B cell (primary cell): ENCODE measurements at regions of chr16 and their contacts with region 1.

Region 1: GRCh38 chr16:71311553-71312158 is 22.5 kb upstream of the CMTR2 start:
- DNase-seq: peak; percentile 58
- ATAC-seq: peak; percentile 57
- H3K4me3 ChIP-seq: no peak overlapping the region
- H3K4me3 Mint-ChIP-seq: no peak overlapping the region
- H3K27ac ChIP-seq: no peak overlapping the region
- H3K27ac Mint-ChIP-seq: no peak overlapping the region
- H3K4me1 ChIP-seq: no peaks in the 10 kb centered on the region
- H3K4me1 Mint-ChIP-seq: no peaks in the 10 kb centered on the region
- H3K27me3 ChIP-seq: peaks cover 0 to 14% (median 5%) of the 10 kb centered on the region in 4 experiments
- H3K27me3 Mint-ChIP-seq: peaks cover 51% of the 10 kb centered on the region
- CTCF ChIP-seq: peak; percentile 85

Region 2: GRCh38 chr16:70770626-70771552 is 540.8 kb before region 1 on chr16:
- CTCF ChIA-PET with region 1: interaction called, 11 read pairs
- POLR2A ChIA-PET with region 1: no interaction called
- intact Hi-C with region 1: no loop called
- DNase-seq: peak; percentile 44
- ATAC-seq: peak; percentile 71
- H3K4me3 ChIP-seq: no peak overlapping the region
- H3K4me3 Mint-ChIP-seq: no peak overlapping the region
- H3K27ac ChIP-seq: no peak overlapping the region
- H3K27ac Mint-ChIP-seq: no peak overlapping the region
- H3K4me1 ChIP-seq: no peaks in the 10 kb centered on the region
- H3K4me1 Mint-ChIP-seq: no peaks in the 10 kb centered on the region
- H3K27me3 ChIP-seq: no peaks in the 10 kb centered on the region
- H3K27me3 Mint-ChIP-seq: no peaks in the 10 kb centered on the region
- CTCF ChIP-seq: peak; percentile 88

Region 3: GRCh38 chr16:71214746-71215381 is 96.8 kb before region 1 on chr16:
- CTCF ChIA-PET with region 1: interaction called, 32 read pairs
- POLR2A ChIA-PET with region 1: no interaction called
- intact Hi-C with region 1: loop called (anchors 1 kb)
- DNase-seq: peak; percentile 9
- ATAC-seq: no peak
- H3K4me3 ChIP-seq: no peak overlapping the region
- H3K4me3 Mint-ChIP-seq: no peak overlapping the region
- H3K27ac ChIP-seq: no peak overlapping the region
- H3K27ac Mint-ChIP-seq: no peak overlapping the region
- H3K4me1 ChIP-seq: no peaks in the 10 kb centered on the region
- H3K4me1 Mint-ChIP-seq: no peaks in the 10 kb centered on the region
- H3K27me3 ChIP-seq: peaks cover 0 to 5% (median 3%) of the 10 kb centered on the region in 4 experiments
- H3K27me3 Mint-ChIP-seq: peaks cover 19% of the 10 kb centered on the region
- CTCF ChIP-seq: peak; percentile 34

Region 4: GRCh38 chr16:71249399-71249798 is 62.3 kb before region 1 on chr16:
- CTCF ChIA-PET with region 1: interaction called, 13 read pairs
- POLR2A ChIA-PET with region 1: no interaction called
- intact Hi-C with region 1: no loop called
- DNase-seq: no peak
- ATAC-seq: no peak
- H3K4me3 ChIP-seq: no peak overlapping the region
- H3K4me3 Mint-ChIP-seq: no peak overlapping the region
- H3K27ac ChIP-seq: no peak overlapping the region
- H3K27ac Mint-ChIP-seq: no peak overlapping the region
- H3K4me1 ChIP-seq: no peaks in the 10 kb centered on the region
- H3K4me1 Mint-ChIP-seq: no peaks in the 10 kb centered on the region
- H3K27me3 ChIP-seq: no peaks in the 10 kb centered on the region
- H3K27me3 Mint-ChIP-seq: peaks cover 9% of the 10 kb centered on the region
- CTCF ChIP-seq: no peak

Region 5: DNA sequence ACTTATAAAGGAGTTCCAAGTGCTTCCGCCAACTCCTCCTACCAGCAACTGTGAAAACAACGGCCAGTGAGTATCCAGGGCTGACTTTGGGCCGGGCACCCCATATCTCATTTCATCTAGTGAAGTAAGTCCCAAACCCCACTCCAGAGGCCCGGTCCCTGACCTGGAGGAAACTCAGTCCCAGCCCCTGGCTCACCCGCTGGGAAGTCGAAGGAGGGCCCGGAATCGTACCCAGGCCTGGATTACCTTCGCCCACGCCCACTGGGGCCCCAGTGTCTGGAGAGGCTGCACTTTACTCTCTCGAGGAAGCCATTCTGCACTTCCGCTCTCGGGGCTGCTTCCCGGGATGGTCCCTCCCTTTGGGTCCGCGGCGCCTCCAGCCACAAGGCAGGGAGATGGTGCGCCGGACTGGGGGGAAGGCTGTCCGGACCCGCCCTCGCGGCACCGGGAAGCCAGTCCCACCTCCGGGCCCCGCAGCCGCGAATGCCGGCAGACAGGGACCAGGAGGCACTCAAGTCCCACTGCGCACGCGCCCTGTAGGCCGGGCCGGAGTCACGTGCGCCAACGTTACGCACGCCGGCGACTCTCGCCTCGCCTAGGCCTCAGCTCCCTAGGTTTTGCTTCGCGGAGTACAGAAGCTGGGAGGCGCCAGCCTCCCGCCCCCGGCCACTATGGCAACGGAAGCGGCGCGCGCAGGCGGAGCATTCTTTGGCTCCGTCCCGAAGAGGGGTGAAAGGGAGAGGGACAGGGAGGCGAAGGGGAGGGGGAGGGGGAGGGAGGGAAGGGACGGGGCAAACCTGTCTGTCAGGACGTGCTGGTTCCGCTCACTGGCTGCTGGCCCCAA is 22.5 kb before region 1 on chr16 and contains the start of gene CMTR2:
- CTCF ChIA-PET with region 1: no interaction called
- POLR2A ChIA-PET with region 1: interaction called, 3 read pairs
- intact Hi-C with region 1: loop called (anchors 1 kb)
- DNase-seq: peak; percentile 95
- ATAC-seq: peak; percentile 85
- H3K4me3 ChIP-seq: peak within 1 kb of the TSS; percentile 61 to 97 (median 67)
- H3K4me3 Mint-ChIP-seq: peak within 1 kb of the TSS; percentile 93
- H3K27ac ChIP-seq: peak within 1 kb of the TSS; percentile 84 to 94
- H3K27ac Mint-ChIP-seq: peak within 1 kb of the TSS; percentile 97
- H3K4me1 ChIP-seq: peaks cover 14 to 16% of the 10 kb centered on the region in 2 donors
- H3K4me1 Mint-ChIP-seq: peaks cover 32% of the 10 kb centered on the region
- H3K27me3 ChIP-seq: peaks cover 0 to 10% (median 5%) of the 10 kb centered on the region in 4 experiments
- H3K27me3 Mint-ChIP-seq: peaks cover 19% of the 10 kb centered on the region
- CTCF ChIP-seq: no peak
- total RNA-seq, gene CMTR2: 41.3 and 46.1 TPM in 2 replicates

Region 6: DNA sequence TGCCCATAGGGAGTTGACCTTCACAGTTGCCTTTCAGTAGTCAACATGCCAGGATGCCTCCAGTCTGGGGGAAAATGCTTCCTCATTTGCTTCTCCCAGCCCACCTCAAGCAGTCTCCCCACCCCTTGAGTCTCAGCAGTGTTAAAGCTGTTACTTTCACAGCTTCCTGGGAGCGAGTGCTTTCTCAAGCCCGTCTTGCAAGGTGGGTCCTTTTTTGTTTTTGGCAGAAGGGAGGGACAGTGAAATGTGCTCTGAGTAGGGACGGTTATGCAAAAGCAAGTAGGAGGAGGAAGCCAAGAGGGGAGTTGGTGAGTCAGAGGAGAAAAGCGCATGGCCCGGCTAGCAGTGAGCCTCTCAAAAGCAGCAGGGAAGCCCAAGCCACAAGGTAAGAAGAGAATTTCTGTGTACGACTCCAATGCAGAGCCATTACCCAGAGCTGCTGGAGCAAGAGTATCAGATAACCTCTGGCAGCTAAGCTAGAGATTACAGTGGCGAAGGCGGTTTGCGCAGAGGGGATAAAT is 214.5 kb after region 1 on chr16 and contains the start of gene CHST4:
- CTCF ChIA-PET with region 1: no interaction called
- POLR2A ChIA-PET with region 1: no interaction called
- intact Hi-C with region 1: no loop called
- DNase-seq: no peak
- ATAC-seq: no peak
- H3K4me3 ChIP-seq: no peak within 1 kb of the TSS
- H3K4me3 Mint-ChIP-seq: peak within 1 kb of the TSS; percentile 45
- H3K27ac ChIP-seq: no peak within 1 kb of the TSS
- H3K27ac Mint-ChIP-seq: no peak within 1 kb of the TSS
- H3K4me1 ChIP-seq: no peaks in the 10 kb centered on the region
- H3K4me1 Mint-ChIP-seq: peaks cover 6% of the 10 kb centered on the region
- H3K27me3 ChIP-seq: peaks cover 0 to 37% (median 6%) of the 10 kb centered on the region in 4 experiments
- H3K27me3 Mint-ChIP-seq: peaks cover 60% of the 10 kb centered on the region
- CTCF ChIP-seq: no peak
- total RNA-seq, gene CHST4: not detected in 2 replicates